ENCODE measurements at regions of chr1 and their contacts with region 1.

Region 1: GRCh38 chr1:45884700-45885099 is 81.3 kb downstream of the MAST2 start:
- DNase-seq: peak; percentile 37
- ATAC-seq: no peak
- H3K4me3 ChIP-seq: no peak overlapping the region
- H3K27ac ChIP-seq: no peak overlapping the region
- H3K4me1 ChIP-seq: peaks cover 16% of the 10 kb centered on the region
- H3K27me3 ChIP-seq: no peaks in the 10 kb centered on the region
- CTCF ChIP-seq: no peak
- POLR2A ChIP-seq: no peak
- RAD21 ChIP-seq: no peak

Region 2: GRCh38 chr1:45583264-45583665 is 301.4 kb before region 1 on chr1:
- CTCF ChIA-PET with region 1: no interaction called
- POLR2A ChIA-PET with region 1: no interaction called
- dilution Hi-C with region 1: no loop called
- in situ Hi-C with region 1: no loop called
- intact Hi-C with region 1: loop called (anchors 5 kb)
- DNase-seq: peak; percentile 96
- ATAC-seq: peak; percentile 88
- H3K4me3 ChIP-seq: peak overlapping the region; percentile 61
- H3K27ac ChIP-seq: peak overlapping the region; percentile 80
- H3K4me1 ChIP-seq: no peaks in the 10 kb centered on the region; the same call in none of the 2 replicates
- H3K27me3 ChIP-seq: no peaks in the 10 kb centered on the region
- CTCF ChIP-seq: no peak
- POLR2A ChIP-seq: no peak
- RAD21 ChIP-seq: no peak

Region 3: DNA sequence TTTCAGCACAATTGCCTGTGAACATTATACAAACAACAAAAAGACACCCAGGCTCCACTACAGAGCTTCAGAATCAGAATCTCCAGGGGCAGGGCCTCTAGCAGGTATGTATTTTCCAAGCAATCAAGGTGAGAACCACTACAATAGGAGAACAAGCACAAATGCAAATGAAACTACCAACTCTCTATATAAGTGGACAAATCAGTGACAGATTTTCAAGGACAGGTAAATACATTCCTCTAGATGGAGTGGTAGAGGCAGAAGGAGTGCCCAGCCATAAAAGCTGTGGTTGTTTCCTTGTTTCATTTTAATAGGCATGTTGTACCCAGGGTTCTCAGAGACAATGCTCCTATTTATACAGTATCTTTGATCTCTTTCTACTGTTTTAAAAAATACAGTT is 240.7 kb before region 1 on chr1:
- CTCF ChIA-PET with region 1: no interaction called
- POLR2A ChIA-PET with region 1: no interaction called
- dilution Hi-C with region 1: no loop called
- in situ Hi-C with region 1: no loop called
- intact Hi-C with region 1: loop called (anchors 5 kb)
- DNase-seq: no peak
- ATAC-seq: no peak
- H3K4me3 ChIP-seq: no peak overlapping the region
- H3K27ac ChIP-seq: no peak overlapping the region
- H3K4me1 ChIP-seq: peaks cover 5% of the 10 kb centered on the region
- H3K27me3 ChIP-seq: no peaks in the 10 kb centered on the region
- CTCF ChIP-seq: no peak
- POLR2A ChIP-seq: no peak
- RAD21 ChIP-seq: no peak

Region 4: GRCh38 chr1:45938041-45938440 is 53.3 kb after region 1 on chr1:
- CTCF ChIA-PET with region 1: no interaction called
- POLR2A ChIA-PET with region 1: no interaction called
- dilution Hi-C with region 1: no loop called
- in situ Hi-C with region 1: no loop called
- intact Hi-C with region 1: no loop called
- DNase-seq: no peak
- ATAC-seq: no peak
- H3K4me3 ChIP-seq: no peak overlapping the region
- H3K27ac ChIP-seq: no peak overlapping the region
- H3K4me1 ChIP-seq: no peaks in the 10 kb centered on the region
- H3K27me3 ChIP-seq: no peaks in the 10 kb centered on the region
- CTCF ChIP-seq: no peak
- POLR2A ChIP-seq: no peak
- RAD21 ChIP-seq: no peak